ENCODE measurements at regions of chr6 and their contacts with region 1.

Region 1: DNA sequence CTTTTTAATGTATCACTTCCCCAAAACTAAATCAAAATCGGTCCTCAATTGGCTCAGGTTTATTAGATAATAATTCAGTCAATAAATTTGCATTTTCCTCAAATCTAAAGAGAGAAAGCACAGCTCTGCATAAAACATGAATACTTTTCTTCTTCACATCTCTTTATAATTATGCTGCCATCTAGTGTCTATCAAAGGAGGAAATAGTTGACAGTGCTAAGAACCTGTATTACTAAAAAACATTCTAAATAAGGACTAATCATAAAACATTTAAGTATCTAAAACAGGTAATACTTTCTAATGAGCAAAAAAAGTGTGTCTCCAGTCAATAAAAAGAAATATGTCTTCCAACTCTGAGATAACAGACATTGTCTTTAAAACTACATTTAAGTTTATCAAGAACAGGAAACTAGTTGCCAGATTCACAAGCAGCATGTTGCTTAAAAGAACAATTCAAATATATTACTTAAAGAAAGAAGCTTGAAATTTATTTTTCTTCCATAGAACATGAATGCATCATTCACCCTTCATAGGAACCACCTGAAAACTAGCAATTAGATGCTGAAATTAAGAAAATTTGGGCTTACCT is 56.5 kb upstream of the DST start:
- DNase-seq: peak; percentile 36
- CTCF ChIP-seq: peak; percentile 41

Region 2: DNA sequence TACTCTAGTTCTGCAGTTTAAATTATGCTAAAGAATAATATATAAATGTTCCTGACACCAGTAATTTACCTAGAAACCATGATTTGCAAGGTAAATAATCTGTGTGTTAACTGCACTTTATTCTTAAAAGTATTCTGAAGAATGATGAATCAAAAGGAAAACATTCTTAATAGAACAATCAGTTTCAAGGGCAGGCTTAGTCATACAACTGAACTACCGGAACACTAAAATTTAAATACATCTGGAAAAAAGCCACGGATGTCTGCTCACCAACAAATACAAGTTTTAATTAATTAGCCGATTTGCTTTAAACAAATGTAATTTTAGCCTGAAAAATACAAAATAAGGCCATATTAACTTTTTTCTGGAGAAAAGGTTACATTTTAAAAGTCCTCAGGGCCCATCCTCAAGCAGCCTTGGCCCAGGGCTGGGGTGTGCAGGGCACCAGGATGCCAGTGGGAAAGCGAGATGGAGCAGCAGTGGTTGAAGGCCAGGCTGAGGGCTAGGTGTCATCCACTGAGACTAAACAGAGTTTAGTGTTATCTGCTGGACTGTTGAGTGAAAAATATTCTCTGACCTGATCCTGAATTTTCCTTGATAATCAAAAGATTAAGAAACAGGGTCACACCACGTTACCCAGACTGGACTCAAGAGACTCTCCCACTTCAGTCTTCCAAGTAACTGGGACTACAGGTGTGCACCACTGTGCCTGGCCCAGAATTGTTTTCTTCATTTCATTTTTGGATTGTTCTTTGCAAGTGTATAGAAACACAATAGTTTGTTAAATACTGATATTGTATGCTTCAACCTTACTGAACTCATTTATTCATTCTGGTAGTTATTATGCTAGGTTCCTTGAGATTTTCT is 31.7 kb after region 1 on chr6:
- CTCF ChIA-PET with region 1: interaction called, 10 read pairs
- POLR2A ChIA-PET with region 1: no interaction called
- DNase-seq: no peak
- CTCF ChIP-seq: no peak

Region 3: DNA sequence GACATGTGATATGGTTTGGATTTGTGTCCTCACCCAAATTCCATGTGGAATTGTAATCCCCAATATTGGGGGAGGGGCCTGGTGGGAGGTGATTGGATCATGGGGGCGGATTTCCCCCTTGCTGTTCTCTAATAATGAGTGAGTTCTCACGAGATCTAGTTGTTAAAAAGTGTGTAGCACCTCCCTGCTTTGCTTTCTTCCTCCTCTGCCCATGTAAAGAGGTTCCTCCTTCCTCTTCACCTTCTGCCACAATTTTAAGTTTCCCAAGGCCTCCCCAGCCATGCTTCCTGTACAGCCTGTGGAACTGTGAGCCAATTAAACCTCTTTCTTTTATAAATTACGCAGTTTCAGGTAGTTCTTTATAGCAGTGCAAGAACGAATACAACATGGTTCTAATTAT is 388.8 kb after region 1 on chr6:
- CTCF ChIA-PET with region 1: no interaction called
- POLR2A ChIA-PET with region 1: no interaction called
- DNase-seq: no peak
- CTCF ChIP-seq: no peak